ENCODE measurements at regions of chr9 and their contacts with region 1.

Region 1: GRCh38 chr9:104863180-104863883 is 64.6 kb downstream of the ABCA1 start:
- DNase-seq: peak; percentile 78
- H3K4me3 ChIP-seq: no peak overlapping the region
- H3K27ac ChIP-seq: no peak overlapping the region
- H3K4me1 ChIP-seq: peaks cover 3% of the 10 kb centered on the region
- H3K27me3 ChIP-seq: no peaks in the 10 kb centered on the region
- CTCF ChIP-seq: peak; percentile 81
- POLR2A ChIP-seq: no peak

Region 2: GRCh38 chr9:104780799-104781395 is 82.4 kb before region 1 on chr9:
- CTCF ChIA-PET with region 1: interaction called, 16 read pairs
- POLR2A ChIA-PET with region 1: no interaction called
- dilution Hi-C with region 1: no loop called
- intact Hi-C with region 1: no loop called
- DNase-seq: peak; percentile 29
- H3K4me3 ChIP-seq: no peak overlapping the region
- H3K27ac ChIP-seq: no peak overlapping the region
- H3K4me1 ChIP-seq: no peaks in the 10 kb centered on the region
- H3K27me3 ChIP-seq: peaks cover 0 to 5% of the 10 kb centered on the region in 2 experiments
- CTCF ChIP-seq: peak; percentile 16 to 23
- POLR2A ChIP-seq: no peak

Region 3: GRCh38 chr9:104844710-104845109 is 18.6 kb before region 1 on chr9:
- CTCF ChIA-PET with region 1: interaction called, 10 read pairs
- POLR2A ChIA-PET with region 1: no interaction called
- dilution Hi-C with region 1: no loop called
- intact Hi-C with region 1: no loop called
- DNase-seq: no peak
- H3K4me3 ChIP-seq: no peak overlapping the region
- H3K27ac ChIP-seq: no peak overlapping the region
- H3K4me1 ChIP-seq: no peaks in the 10 kb centered on the region
- H3K27me3 ChIP-seq: no peaks in the 10 kb centered on the region
- CTCF ChIP-seq: no peak
- POLR2A ChIP-seq: no peak

Region 4: DNA sequence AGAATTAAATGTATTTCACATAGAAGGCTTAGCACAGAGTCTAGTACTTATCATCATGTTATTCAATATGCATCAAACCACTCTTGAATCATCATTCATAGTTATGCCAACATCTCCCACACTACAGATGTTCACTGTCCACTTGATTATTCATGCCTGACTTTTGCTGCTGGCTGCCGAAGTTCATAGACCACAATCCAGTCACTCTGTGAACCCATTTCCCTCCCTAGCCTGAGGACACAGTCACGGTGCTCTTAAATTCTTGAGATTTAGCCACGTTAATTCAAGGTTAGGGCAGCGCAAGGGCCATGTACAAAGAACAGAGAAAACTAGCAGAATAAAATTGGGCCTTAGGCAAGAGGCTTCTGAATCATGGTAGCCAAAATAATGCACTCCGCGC is 32.2 kb after region 1 on chr9:
- CTCF ChIA-PET with region 1: interaction called, 12 read pairs
- POLR2A ChIA-PET with region 1: no interaction called
- dilution Hi-C with region 1: no loop called
- intact Hi-C with region 1: no loop called
- DNase-seq: no peak
- H3K4me3 ChIP-seq: no peak overlapping the region
- H3K27ac ChIP-seq: no peak overlapping the region
- H3K4me1 ChIP-seq: no peaks in the 10 kb centered on the region
- H3K27me3 ChIP-seq: no peaks in the 10 kb centered on the region
- CTCF ChIP-seq: no peak
- POLR2A ChIP-seq: no peak

Region 5: DNA sequence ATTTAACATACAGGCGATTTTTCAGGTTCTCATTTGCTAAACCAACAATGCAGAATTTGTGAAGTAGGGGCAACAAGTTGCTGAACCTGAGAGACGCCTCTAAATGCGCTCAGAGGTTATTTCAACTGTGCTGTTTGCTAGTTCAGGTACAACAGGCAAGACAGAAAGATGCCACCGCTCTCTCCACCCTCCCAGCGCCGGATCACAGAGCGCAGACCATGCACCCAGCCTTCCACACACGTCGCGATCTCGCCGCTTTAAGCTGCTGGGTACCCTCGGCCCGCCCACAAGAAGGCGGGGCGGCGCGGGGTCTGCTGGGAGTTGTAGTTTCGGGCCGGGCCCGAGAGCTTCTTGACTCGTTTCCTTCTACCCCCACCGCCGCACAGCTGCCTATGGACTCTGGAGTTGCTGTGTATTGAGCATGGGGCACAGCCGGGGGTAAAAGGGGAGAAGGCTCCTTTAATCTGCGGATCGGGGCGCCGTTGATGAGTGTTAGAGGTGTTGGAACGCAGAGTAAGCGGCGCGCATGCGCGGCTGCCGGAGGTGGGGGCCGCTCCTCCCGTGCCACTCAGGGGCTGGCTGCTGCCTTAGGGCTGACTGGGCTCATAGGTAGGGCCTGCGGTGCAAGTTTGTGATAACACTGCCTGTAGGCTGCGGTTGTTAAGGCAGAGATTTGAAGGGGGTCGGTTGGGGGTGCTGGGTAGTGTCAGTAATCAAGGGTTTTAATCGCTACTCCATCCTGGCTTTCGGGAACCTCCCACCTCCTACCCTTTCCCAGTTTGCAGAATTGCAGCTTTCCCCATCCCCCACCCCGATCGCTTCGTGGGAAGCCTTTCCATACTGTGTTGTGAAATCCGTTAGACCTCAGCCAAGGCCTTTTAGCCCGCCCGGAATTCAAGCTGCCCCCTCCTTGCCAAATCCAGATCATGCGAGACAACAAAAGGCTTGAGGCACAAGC is 105.0 kb after region 1 on chr9:
- CTCF ChIA-PET with region 1: interaction called, 15 read pairs
- POLR2A ChIA-PET with region 1: no interaction called
- dilution Hi-C with region 1: no loop called
- intact Hi-C with region 1: loop called (anchors 1 kb)
- DNase-seq: peak; percentile 86
- H3K4me3 ChIP-seq: peak overlapping the region; percentile 63 to 93 (median 87)
- H3K27ac ChIP-seq: peak overlapping the region; percentile 58
- H3K4me1 ChIP-seq: peaks cover 6% of the 10 kb centered on the region
- H3K27me3 ChIP-seq: peaks cover 3% of the 10 kb centered on the region in 2 experiments
- CTCF ChIP-seq: no peak
- POLR2A ChIP-seq: no peak

Region 6: DNA sequence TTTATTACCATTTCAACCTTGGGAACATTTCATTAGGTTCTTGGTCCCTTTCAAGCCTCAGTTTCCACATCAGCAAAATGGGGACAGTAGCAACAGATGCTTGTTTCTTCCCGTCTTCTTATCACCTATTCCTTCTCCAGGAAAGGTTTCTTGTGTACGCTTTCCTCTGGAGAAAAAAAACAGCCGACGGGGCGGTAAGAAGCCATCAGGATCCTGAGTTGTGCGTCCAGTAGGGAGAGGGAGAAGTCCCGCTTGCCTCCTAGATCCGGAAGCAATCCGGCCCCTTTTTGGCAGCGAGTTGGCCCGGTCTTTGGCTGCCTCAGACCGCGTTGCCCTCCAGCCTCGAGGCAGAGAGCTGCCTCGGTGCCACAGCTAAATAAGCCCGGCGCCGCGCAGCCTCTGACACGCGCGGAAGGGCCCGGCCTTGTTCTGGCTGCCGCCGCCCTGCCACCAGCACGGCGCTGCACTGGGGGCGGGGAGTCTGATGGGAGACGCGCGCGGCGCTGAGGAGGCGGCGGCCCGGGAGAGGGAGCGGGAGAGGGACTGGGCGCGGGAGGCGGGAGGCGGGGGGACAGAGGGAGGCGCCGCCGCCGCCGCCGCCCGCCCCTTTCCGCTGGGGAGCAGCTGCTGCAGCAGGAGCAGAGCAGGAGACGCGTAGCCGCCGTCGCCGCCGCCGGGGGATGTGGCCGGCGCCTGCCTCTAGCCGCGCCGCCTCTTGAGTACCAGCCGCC is 380.8 kb after region 1 on chr9 and contains the start of gene SLC44A1:
- CTCF ChIA-PET with region 1: interaction called, 6 read pairs
- POLR2A ChIA-PET with region 1: no interaction called
- dilution Hi-C with region 1: no loop called
- intact Hi-C with region 1: loop called (anchors 2 kb)
- DNase-seq: peak; percentile 96
- H3K4me3 ChIP-seq: peak within 1 kb of the TSS; percentile 69 to 90 (median 72)
- H3K27ac ChIP-seq: peak within 1 kb of the TSS; percentile 95
- H3K4me1 ChIP-seq: peaks cover 28% of the 10 kb centered on the region
- H3K27me3 ChIP-seq: no peaks in the 10 kb centered on the region
- CTCF ChIP-seq: no peak
- POLR2A ChIP-seq: peak; percentile 62
- total RNA-seq, gene SLC44A1: 35.3 and 37.7 TPM in 2 replicates